Activated CD4-positive, alpha-beta memory T cell treated with anti-CD3 and anti-CD28 coated beads, Interleukin-2, amount 10 ng/mL, durations not matched to agents 7 days and 5 days (primary cell): ENCODE measurements at regions of chr2 and their contacts with region 1.

Region 1: DNA sequence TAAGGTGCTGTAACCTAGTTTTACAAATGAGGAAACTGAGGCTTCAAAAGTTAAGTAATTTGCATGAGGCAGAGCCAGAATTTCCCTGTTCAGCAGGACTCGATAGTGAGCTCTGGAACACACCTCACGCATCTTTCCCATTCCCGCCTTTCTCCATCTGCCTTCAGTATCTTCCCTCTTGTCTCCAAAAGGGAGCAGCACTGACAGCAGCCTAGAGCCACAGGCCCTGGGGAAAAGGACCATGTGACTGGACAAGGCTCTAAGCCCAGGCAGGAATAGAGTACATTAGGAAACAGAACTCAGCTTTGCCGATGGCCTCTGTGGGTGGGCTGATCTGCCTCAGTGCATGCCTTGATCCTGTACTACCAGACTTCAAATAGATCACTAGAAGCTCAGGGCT is 21.5 kb downstream of the GPR155 start:
- DNase-seq: no peak
- H3K4me3 Mint-ChIP-seq: no peak overlapping the region
- H3K27ac Mint-ChIP-seq: no peak overlapping the region
- H3K4me1 Mint-ChIP-seq: no peaks in the 10 kb centered on the region
- H3K27me3 Mint-ChIP-seq: no peaks in the 10 kb centered on the region

Region 2: DNA sequence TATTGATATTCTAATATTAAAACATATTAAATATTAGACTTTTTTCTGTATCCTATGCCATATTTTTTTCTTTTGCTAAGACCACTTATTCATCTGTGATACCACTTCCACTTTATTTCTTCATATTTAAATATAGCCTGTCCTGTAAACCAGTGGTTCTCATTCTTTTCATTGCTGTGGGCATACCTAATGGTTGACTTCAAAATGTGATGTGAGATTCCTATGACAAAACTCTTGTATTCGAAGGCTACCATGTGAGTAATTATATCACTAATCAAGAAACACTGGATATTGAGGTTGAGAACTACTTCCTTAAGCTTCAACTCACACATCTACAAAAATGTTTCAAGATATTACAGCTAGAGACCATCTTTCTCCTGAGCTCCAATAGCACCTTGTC is 66.2 kb before region 1 on chr2:
- CTCF ChIA-PET with region 1: no interaction called
- POLR2A ChIA-PET with region 1: no interaction called
- DNase-seq: no peak
- H3K4me3 Mint-ChIP-seq: no peak overlapping the region
- H3K27ac Mint-ChIP-seq: no peak overlapping the region
- H3K4me1 Mint-ChIP-seq: peaks cover 25% of the 10 kb centered on the region
- H3K27me3 Mint-ChIP-seq: no peaks in the 10 kb centered on the region

Region 3: GRCh38 chr2:174454566-174454965 is 10.8 kb before region 1 on chr2:
- CTCF ChIA-PET with region 1: no interaction called
- POLR2A ChIA-PET with region 1: no interaction called
- DNase-seq: no peak
- H3K4me3 Mint-ChIP-seq: no peak overlapping the region
- H3K27ac Mint-ChIP-seq: no peak overlapping the region
- H3K4me1 Mint-ChIP-seq: peaks cover 6% of the 10 kb centered on the region
- H3K27me3 Mint-ChIP-seq: no peaks in the 10 kb centered on the region

Region 4: GRCh38 chr2:174492963-174493431 is 27.7 kb after region 1 on chr2:
- CTCF ChIA-PET with region 1: interaction called, 35 read pairs
- POLR2A ChIA-PET with region 1: interaction called, 9 read pairs
- DNase-seq: peak; percentile 69
- H3K4me3 Mint-ChIP-seq: peak overlapping the region; percentile 69
- H3K27ac Mint-ChIP-seq: peak overlapping the region; percentile 97
- H3K4me1 Mint-ChIP-seq: peaks cover 61% of the 10 kb centered on the region
- H3K27me3 Mint-ChIP-seq: no peaks in the 10 kb centered on the region

Region 5: DNA sequence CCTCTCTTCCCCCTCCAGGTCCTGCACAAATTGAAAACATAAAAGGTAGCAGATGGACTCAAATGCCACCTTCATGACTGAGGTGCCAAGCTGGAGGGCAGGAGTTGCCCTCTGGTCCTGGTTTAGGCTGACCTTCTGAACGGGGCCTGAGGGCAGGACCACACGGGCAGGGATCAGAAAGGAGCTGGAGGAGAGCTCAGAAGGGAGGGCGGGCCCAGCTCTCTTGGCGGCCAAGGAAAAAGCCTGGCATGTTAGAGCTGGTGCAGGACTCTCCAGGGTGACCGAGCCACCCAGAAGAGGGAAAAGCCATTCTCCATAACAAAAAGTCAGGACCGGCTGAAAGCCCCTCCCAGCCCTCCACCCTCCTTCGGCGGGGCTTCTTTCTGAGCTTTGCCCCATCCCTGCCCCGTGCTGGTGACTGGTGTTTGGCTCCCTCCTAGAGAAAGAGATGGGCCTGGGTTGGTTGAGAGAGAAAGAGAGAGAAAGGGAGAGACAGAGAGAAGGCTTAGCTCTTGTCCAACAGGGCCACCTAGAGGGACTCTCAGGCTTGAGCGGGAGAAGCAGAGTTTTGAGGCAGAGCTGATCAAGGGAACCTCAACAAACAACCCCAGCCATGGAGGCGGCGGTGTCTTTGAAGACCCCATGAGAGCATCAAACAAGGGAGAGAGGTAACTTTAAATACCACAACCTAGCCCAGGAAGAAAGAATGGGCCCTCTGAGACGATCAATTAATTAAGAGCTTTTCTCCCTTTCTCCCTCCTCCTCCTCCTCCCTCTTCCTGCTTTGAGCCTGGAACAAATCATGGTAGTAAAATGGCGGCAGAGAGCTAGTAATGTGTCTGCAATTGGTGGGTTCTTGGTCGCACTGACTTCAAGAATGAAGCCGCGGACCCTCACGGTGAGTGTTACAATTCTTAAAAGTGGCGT is 81.5 kb after region 1 on chr2:
- CTCF ChIA-PET with region 1: interaction called, 133 read pairs
- POLR2A ChIA-PET with region 1: interaction called, 10 read pairs
- DNase-seq: peak; percentile 57
- H3K4me3 Mint-ChIP-seq: no peak overlapping the region
- H3K27ac Mint-ChIP-seq: no peak overlapping the region
- H3K4me1 Mint-ChIP-seq: peaks cover 5% of the 10 kb centered on the region
- H3K27me3 Mint-ChIP-seq: no peaks in the 10 kb centered on the region

Region 6: GRCh38 chr2:174563530-174564282 is 98.4 kb after region 1 on chr2:
- CTCF ChIA-PET with region 1: interaction called, 10 read pairs
- POLR2A ChIA-PET with region 1: interaction called, 6 read pairs
- DNase-seq: no peak
- H3K4me3 Mint-ChIP-seq: no peak overlapping the region
- H3K27ac Mint-ChIP-seq: no peak overlapping the region
- H3K4me1 Mint-ChIP-seq: peaks cover 18% of the 10 kb centered on the region
- H3K27me3 Mint-ChIP-seq: no peaks in the 10 kb centered on the region

Region 7: GRCh38 chr2:174603280-174603679 is 138.0 kb after region 1 on chr2:
- CTCF ChIA-PET with region 1: interaction called, 25 read pairs
- POLR2A ChIA-PET with region 1: no interaction called
- DNase-seq: peak; percentile 64
- H3K4me3 Mint-ChIP-seq: no peak overlapping the region
- H3K27ac Mint-ChIP-seq: peak overlapping the region; percentile 56
- H3K4me1 Mint-ChIP-seq: peaks cover 90% of the 10 kb centered on the region
- H3K27me3 Mint-ChIP-seq: no peaks in the 10 kb centered on the region

Region 8: GRCh38 chr2:174697255-174697654 is 231.9 kb after region 1 on chr2:
- CTCF ChIA-PET with region 1: interaction called, 21 read pairs
- POLR2A ChIA-PET with region 1: no interaction called
- DNase-seq: peak; percentile 72
- H3K4me3 Mint-ChIP-seq: no peak overlapping the region
- H3K27ac Mint-ChIP-seq: no peak overlapping the region
- H3K4me1 Mint-ChIP-seq: peaks cover 3% of the 10 kb centered on the region
- H3K27me3 Mint-ChIP-seq: peaks cover 29% of the 10 kb centered on the region